ENCODE measurements at regions of chr4 and their contacts with region 1.

Region 1: GRCh38 chr4:58957716-58958115 is 1847.5 kb upstream of the IGFBP7 start:
- DNase-seq: no peak
- ATAC-seq: no peak
- H3K4me3 ChIP-seq: no peak overlapping the region
- H3K27ac ChIP-seq: no peak overlapping the region
- H3K4me1 ChIP-seq: no peaks in the 10 kb centered on the region
- H3K27me3 ChIP-seq: no peaks in the 10 kb centered on the region
- CTCF ChIP-seq: no peak
- POLR2A ChIP-seq: no peak

Region 2: DNA sequence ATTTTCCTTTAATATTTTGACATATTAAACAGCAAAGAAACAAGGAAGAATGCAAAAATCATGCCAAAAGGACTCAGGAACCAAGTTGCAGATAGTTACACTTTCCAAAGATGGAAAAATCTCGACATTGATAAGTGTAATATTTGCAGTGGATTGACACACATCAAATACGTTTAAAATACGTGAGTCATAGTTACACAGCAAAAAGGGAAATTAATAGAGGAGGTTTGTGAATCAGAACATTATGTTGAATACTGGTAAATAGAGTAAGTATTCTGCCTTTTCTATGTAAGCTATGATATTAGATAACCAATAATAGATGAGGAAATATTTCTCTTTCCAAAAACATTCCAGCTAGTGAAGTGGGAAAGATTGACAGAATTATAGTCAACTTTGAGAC is 86.2 kb before region 1 on chr4:
- in situ Hi-C with region 1: loop called in 2 of 4 experiments (anchors 25 kb)
- intact Hi-C with region 1: no loop called
- DNase-seq: no peak
- ATAC-seq: no peak
- H3K4me3 ChIP-seq: no peak overlapping the region
- H3K27ac ChIP-seq: no peak overlapping the region
- H3K4me1 ChIP-seq: no peaks in the 10 kb centered on the region
- H3K27me3 ChIP-seq: no peaks in the 10 kb centered on the region
- CTCF ChIP-seq: no peak
- POLR2A ChIP-seq: no peak

Measured in gastrocnemius medialis (tissue), 4 donors.